A673 (cell line): ENCODE measurements at regions of chr2 and their contacts with region 1.

Region 1: DNA sequence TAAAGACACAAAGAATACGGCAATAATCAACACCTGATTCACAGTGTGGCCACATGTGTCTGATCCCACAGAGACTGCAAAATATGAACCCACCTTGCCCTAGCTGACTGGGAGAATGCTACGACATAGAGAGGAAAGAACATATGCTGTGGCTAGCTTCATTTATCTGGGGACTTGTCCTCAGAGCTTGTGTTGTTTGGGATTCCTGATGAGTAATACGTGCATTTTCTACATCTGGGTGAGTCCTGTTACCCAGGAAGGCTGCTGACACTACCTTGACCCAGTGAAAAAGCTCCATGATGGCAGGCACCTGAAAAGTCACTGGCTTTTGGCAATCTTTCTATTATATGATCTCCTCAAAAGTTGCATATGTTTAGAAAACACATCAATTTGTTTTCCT is 427.7 kb upstream of the LYPD1 start:
- DNase-seq: no peak
- H3K4me3 ChIP-seq: no peak overlapping the region
- H3K27ac ChIP-seq: no peak overlapping the region
- H3K4me1 ChIP-seq: no peaks in the 10 kb centered on the region
- H3K27me3 ChIP-seq: no peaks in the 10 kb centered on the region
- CTCF ChIP-seq: no peak

Region 2: DNA sequence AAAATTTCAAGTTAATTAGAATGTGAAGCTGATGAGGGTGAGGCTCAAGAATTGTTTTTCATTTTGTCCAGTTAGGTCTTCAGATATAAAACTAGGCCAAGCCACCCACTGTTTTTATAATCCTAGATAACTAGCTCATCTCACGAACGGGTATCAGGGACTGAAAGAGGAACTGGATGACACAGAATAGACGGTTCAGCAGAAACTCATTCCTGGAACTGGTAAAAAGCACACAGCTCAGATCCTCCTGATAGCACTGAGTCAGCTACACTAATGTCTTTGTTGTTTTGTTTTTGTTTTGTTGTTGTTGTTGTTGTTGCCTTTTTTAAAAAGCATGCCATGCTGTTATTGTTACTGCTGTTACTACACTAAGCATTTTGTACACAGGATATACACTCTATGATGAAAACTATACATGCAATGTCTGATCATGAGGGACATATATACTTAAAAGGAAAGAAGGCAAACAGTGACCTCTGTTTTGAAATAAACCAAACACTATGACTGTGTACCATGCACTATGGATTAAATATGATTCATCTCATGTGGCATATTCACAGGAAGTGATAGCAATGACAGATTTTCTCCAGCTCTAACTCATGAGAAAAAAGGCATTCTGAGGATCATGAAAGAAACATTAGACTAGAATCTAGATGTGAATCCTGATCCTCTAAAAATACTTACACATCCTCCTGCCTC is 33.0 kb after region 1 on chr2:
- CTCF ChIA-PET with region 1: no interaction called
- POLR2A ChIA-PET with region 1: interaction called, 10 read pairs
- intact Hi-C with region 1: no loop called
- DNase-seq: peak; percentile 39
- H3K4me3 ChIP-seq: no peak overlapping the region
- H3K27ac ChIP-seq: no peak overlapping the region
- H3K4me1 ChIP-seq: peaks cover 6% of the 10 kb centered on the region
- H3K27me3 ChIP-seq: no peaks in the 10 kb centered on the region
- CTCF ChIP-seq: no peak